Lower leg skin (tissue), 4 donors: ENCODE measurements at regions of chr19 and their contacts with region 1.

Region 1: DNA sequence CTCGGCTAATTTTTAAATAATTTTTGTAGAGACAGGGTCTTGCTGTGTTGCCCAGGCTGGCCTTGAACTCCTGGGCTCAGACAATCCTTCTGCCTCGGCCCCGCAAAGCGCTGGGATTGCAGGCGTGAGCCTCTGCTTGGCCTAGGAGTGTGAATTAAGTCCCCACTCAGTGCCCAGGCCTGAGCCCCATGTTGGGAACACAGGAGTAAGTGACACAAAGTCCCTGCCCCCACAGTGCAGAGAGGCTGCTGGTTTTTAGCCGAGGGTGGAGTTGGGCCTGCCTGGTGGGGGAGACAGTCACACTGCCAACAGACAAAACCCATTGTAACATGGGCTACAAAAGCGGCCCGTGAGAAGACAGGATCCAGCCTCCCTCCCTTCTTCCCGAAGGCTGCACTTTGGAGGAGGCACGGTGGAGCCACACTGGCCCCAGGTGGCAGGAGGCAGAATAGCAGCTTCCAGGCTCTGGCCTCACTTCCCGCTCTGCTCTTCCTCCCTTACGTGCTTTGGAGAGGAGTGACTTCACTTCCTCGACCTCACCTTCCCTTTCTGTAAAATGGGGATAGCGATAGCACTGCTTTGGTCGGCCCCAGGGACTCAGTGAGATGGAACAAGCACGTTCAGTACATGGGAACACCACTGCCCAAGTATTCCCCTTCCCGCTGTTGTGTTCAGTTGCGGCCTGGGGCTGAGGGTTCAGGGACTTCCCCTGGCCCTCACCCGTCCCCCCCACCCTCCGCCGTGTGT is 15.2 kb upstream of the EHD2 start:
- DNase-seq: peak; percentile 59 to 94
- H3K4me3 ChIP-seq: no peak overlapping the region
- CTCF ChIP-seq: peak in 1 of 3 donors; percentile 97
- POLR2A ChIP-seq: no peak

Region 2: GRCh38 chr19:47436712-47437401 is 261.2 kb before region 1 on chr19:
- intact Hi-C with region 1: loop called (anchors 5 kb)
- DNase-seq: peak; percentile 69 to 95
- H3K4me3 ChIP-seq: no peak overlapping the region
- CTCF ChIP-seq: peak in 1 of 3 donors; percentile 92
- POLR2A ChIP-seq: no peak

Region 3: DNA sequence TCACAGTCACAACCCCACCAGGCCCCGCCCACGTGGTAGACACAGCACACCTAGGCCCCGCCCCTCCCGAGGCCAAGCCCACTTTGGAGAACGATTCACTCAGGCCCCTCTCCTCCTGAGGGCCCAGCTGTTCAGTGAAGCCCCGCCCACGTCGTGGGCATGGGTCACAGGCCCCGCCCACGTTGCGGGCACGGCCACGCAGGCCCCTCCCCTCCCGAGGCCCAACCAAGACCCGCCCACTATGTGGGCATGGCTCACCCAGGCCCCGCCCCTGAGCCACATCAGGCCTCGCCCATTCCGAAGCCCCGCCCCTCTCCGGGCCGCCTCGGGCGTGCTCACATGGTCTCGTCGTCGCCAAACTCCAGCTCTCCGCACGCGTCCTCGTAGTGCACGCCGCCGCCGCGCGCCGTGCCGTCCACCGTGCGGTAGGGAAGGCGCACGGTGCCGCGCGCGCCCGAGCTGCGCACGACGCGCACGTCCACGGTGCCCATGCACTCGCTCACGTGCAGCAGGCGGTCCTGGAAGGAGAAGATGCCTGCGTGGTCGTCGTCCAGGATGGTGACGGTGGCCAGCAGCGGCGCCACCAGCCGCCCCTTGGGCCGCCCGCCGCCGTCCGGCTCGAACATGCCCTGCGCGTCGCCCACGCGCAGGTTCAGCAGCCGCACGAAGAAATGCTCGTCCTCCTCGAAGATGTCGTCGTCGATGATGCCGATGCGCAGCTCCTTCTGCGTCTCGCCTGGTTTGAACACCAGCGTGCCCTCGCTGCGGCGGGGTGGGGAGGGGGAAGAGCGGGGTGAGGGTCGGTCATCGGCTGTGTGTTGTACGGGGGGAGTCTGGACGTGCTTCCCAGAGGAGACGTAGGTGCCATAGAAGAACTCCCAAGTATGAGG is 250.3 kb before region 1 on chr19:
- intact Hi-C with region 1: loop called (anchors 5 kb)
- DNase-seq: no peak
- H3K4me3 ChIP-seq: no peak overlapping the region
- CTCF ChIP-seq: no peak
- POLR2A ChIP-seq: no peak

Region 4: GRCh38 chr19:47644762-47645482 is 53.1 kb before region 1 on chr19:
- intact Hi-C with region 1: no loop called
- DNase-seq: no peak
- H3K4me3 ChIP-seq: no peak overlapping the region
- CTCF ChIP-seq: no peak
- POLR2A ChIP-seq: no peak